Tibial artery (tissue), 4 donors: ENCODE measurements at regions of chr22 and their contacts with region 1.

Region 1: DNA sequence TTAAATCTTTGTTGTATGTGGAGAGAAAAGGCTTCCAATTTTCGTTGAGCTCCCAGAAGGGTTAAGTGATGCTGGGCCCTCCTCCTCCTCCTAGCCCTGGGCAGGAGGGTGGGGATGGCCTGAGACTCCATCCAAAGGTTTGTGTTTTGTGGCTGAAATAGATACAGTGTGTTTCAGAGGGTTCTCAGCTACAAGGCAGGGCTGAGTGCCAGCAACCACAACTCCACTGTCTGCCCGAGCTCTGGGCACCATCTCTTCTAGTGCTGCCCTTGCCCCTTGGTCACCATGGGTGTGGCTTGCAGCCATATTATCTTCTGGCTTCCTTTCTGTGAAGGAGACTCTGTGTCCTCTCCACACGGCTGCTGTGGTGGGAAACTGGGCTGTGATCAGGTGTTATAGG is 47.9 kb downstream of the MED15 start:
- DNase-seq: no peak
- H3K4me3 ChIP-seq: no peak overlapping the region
- H3K27ac ChIP-seq: peak overlapping the region; percentile 92 to 96
- H3K4me1 ChIP-seq: peaks cover 18 to 69% (median 54%) of the 10 kb centered on the region in 4 donors
- H3K27me3 ChIP-seq: no peaks in the 10 kb centered on the region
- CTCF ChIP-seq: no peak

Region 2: GRCh38 chr22:20319745-20320658 is 235.3 kb before region 1 on chr22 and contains the start of gene DGCR6L:
- intact Hi-C with region 1: loop called (anchors 5 kb)
- DNase-seq: peak; percentile 96 to 97
- H3K4me3 ChIP-seq: peak within 1 kb of the TSS; percentile 90 to 100
- H3K27ac ChIP-seq: peak within 1 kb of the TSS; percentile 85 to 92
- H3K4me1 ChIP-seq: peaks cover 0 to 52% (median 27%) of the 10 kb centered on the region in 4 donors
- H3K27me3 ChIP-seq: no peaks in the 10 kb centered on the region
- CTCF ChIP-seq: no peak

Region 3: GRCh38 chr22:20509344-20510047 is 45.8 kb before region 1 on chr22:
- intact Hi-C with region 1: loop called (anchors 5 kb)
- DNase-seq: peak; percentile 86 to 88
- H3K4me3 ChIP-seq: peak overlapping the region; percentile 77 to 95
- H3K27ac ChIP-seq: peak overlapping the region; percentile 97 to 99
- H3K4me1 ChIP-seq: peaks cover 0 to 58% (median 41%) of the 10 kb centered on the region in 4 donors
- H3K27me3 ChIP-seq: no peaks in the 10 kb centered on the region
- CTCF ChIP-seq: no peak

Region 4: GRCh38 chr22:20741634-20742581 is 186.6 kb after region 1 on chr22:
- intact Hi-C with region 1: no loop called
- DNase-seq: no peak
- H3K4me3 ChIP-seq: no peak overlapping the region
- H3K27ac ChIP-seq: no peak overlapping the region
- H3K4me1 ChIP-seq: no peaks in the 10 kb centered on the region
- H3K27me3 ChIP-seq: no peaks in the 10 kb centered on the region
- CTCF ChIP-seq: peak; percentile 39 to 47